ENCODE measurements at regions of chr2 and their contacts with region 1.

Region 1: GRCh38 chr2:234135720-234136221 is 85.3 kb downstream of the SPP2 start:
- DNase-seq: peak; percentile 80
- H3K4me3 ChIP-seq: no peak overlapping the region
- H3K27ac ChIP-seq: peak overlapping the region; percentile 70
- H3K4me1 ChIP-seq: peaks cover 83% of the 10 kb centered on the region
- H3K27me3 ChIP-seq: no peaks in the 10 kb centered on the region
- CTCF ChIP-seq: peak; percentile 82 to 84

Region 2: GRCh38 chr2:233982421-233983121 is 153.2 kb before region 1 on chr2:
- CTCF ChIA-PET with region 1: interaction called, 7 read pairs
- dilution Hi-C with region 1: no loop called
- in situ Hi-C with region 1: loop called in 1 of 2 experiments (anchors 10 kb)
- intact Hi-C with region 1: loop called (anchors 1 kb)
- DNase-seq: peak; percentile 95
- H3K4me3 ChIP-seq: no peak overlapping the region
- H3K27ac ChIP-seq: peak overlapping the region; percentile 92
- H3K4me1 ChIP-seq: peaks cover 46% of the 10 kb centered on the region
- H3K27me3 ChIP-seq: no peaks in the 10 kb centered on the region
- CTCF ChIP-seq: no peak

Region 3: GRCh38 chr2:234241656-234242458 is 106.1 kb after region 1 on chr2:
- CTCF ChIA-PET with region 1: interaction called, 4 read pairs
- dilution Hi-C with region 1: loop called (anchors 5 kb)
- in situ Hi-C with region 1: loop called in 1 of 2 experiments (anchors 5 kb)
- intact Hi-C with region 1: loop called (anchors 1 kb)
- DNase-seq: peak; percentile 93
- H3K4me3 ChIP-seq: peak overlapping the region in 2 of 3 experiments; percentile 1 to 27
- H3K27ac ChIP-seq: peak overlapping the region; percentile 95
- H3K4me1 ChIP-seq: peaks cover 52% of the 10 kb centered on the region
- H3K27me3 ChIP-seq: no peaks in the 10 kb centered on the region
- CTCF ChIP-seq: no peak

Region 4: GRCh38 chr2:234308813-234309195 is 173.0 kb after region 1 on chr2:
- CTCF ChIA-PET with region 1: no interaction called
- dilution Hi-C with region 1: no loop called
- in situ Hi-C with region 1: no loop called
- intact Hi-C with region 1: loop called (anchors 2 kb)
- DNase-seq: no peak
- H3K4me3 ChIP-seq: no peak overlapping the region
- H3K27ac ChIP-seq: no peak overlapping the region
- H3K4me1 ChIP-seq: peaks cover 26% of the 10 kb centered on the region
- H3K27me3 ChIP-seq: no peaks in the 10 kb centered on the region
- CTCF ChIP-seq: no peak

Region 5: GRCh38 chr2:234348081-234348480 is 212.3 kb after region 1 on chr2:
- CTCF ChIA-PET with region 1: no interaction called
- dilution Hi-C with region 1: no loop called
- in situ Hi-C with region 1: no loop called
- intact Hi-C with region 1: no loop called
- DNase-seq: no peak
- H3K4me3 ChIP-seq: no peak overlapping the region
- H3K27ac ChIP-seq: no peak overlapping the region
- H3K4me1 ChIP-seq: no peaks in the 10 kb centered on the region
- H3K27me3 ChIP-seq: no peaks in the 10 kb centered on the region
- CTCF ChIP-seq: no peak

Region 6: GRCh38 chr2:234425619-234426603 is 290.1 kb after region 1 on chr2:
- CTCF ChIA-PET with region 1: interaction called, 5 read pairs
- dilution Hi-C with region 1: no loop called
- in situ Hi-C with region 1: loop called in 1 of 2 experiments (anchors 10 kb)
- intact Hi-C with region 1: no loop called
- DNase-seq: peak; percentile 68
- H3K4me3 ChIP-seq: no peak overlapping the region
- H3K27ac ChIP-seq: no peak overlapping the region
- H3K4me1 ChIP-seq: peaks cover 48% of the 10 kb centered on the region
- H3K27me3 ChIP-seq: no peaks in the 10 kb centered on the region
- CTCF ChIP-seq: no peak

Region 7: DNA sequence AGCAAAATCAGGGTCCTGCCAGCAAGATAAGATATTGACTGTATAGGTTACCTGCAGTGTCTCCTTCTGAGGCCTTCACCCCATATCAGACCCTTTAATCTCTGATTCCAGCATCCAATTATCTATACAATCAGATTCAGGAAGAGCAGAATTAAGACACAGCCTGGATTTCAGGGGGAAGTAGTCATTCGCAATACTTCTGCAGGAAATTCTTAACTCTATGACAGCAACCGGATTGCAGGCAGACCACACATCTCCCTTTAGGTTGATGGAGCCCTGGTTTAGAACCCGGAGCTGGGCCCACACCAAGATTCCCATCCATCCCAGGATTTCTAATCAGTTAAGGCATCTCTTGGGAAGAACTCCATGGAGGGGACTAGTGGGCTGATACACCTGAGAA is 351.6 kb after region 1 on chr2:
- CTCF ChIA-PET with region 1: no interaction called
- dilution Hi-C with region 1: no loop called
- in situ Hi-C with region 1: no loop called
- intact Hi-C with region 1: no loop called
- DNase-seq: no peak
- H3K4me3 ChIP-seq: no peak overlapping the region
- H3K27ac ChIP-seq: no peak overlapping the region
- H3K4me1 ChIP-seq: peaks cover 12% of the 10 kb centered on the region
- H3K27me3 ChIP-seq: no peaks in the 10 kb centered on the region
- CTCF ChIP-seq: no peak

Region 8: GRCh38 chr2:234500394-234501006 is 364.7 kb after region 1 on chr2:
- CTCF ChIA-PET with region 1: interaction called, 4 read pairs
- dilution Hi-C with region 1: loop called (anchors 5 kb)
- in situ Hi-C with region 1: loop called (anchors 5 kb)
- intact Hi-C with region 1: loop called (anchors 1 kb)
- DNase-seq: peak; percentile 47
- H3K4me3 ChIP-seq: no peak overlapping the region
- H3K27ac ChIP-seq: no peak overlapping the region
- H3K4me1 ChIP-seq: peaks cover 31% of the 10 kb centered on the region
- H3K27me3 ChIP-seq: no peaks in the 10 kb centered on the region
- CTCF ChIP-seq: peak; percentile 54 to 73

Region 9: DNA sequence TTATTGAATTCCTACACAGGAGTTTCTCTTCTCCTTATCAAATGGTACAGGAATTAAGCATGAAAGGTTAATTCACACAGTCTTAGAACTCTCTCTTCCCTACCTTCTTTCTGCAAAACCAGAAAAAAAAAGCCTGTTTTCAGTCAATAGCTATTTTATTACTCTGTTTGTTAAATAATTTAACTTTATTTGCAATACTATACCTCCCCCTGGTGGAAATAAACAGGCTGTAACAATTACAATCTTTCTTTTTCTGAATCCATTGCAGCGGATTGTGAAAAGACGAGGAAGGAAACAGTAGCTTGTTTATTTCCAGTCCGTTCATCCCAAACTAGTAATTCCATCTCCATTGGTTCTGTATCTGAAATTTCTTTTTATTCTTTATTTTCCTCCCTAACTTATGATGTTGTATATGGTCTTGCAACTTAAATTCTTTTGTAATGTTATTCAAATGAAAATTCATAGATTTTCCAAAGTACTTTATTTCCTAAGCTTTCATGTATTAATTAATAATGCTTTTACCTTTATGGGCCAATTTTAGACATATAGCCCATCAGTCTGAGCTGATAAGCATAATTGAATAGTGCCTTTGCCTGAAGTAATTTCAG is 981.2 kb after region 1 on chr2:
- CTCF ChIA-PET with region 1: no interaction called
- dilution Hi-C with region 1: no loop called
- in situ Hi-C with region 1: no loop called
- intact Hi-C with region 1: loop called (anchors 10 kb)
- DNase-seq: peak; percentile 24
- H3K4me3 ChIP-seq: no peak overlapping the region
- H3K27ac ChIP-seq: no peak overlapping the region
- H3K4me1 ChIP-seq: no peaks in the 10 kb centered on the region
- H3K27me3 ChIP-seq: no peaks in the 10 kb centered on the region
- CTCF ChIP-seq: peak; percentile 58 to 66

Measured in mammary epithelial cell (primary cell).